CD8-positive, alpha-beta T cell (primary cell): ENCODE measurements at regions of chr1 and their contacts with region 1.

Region 1: DNA sequence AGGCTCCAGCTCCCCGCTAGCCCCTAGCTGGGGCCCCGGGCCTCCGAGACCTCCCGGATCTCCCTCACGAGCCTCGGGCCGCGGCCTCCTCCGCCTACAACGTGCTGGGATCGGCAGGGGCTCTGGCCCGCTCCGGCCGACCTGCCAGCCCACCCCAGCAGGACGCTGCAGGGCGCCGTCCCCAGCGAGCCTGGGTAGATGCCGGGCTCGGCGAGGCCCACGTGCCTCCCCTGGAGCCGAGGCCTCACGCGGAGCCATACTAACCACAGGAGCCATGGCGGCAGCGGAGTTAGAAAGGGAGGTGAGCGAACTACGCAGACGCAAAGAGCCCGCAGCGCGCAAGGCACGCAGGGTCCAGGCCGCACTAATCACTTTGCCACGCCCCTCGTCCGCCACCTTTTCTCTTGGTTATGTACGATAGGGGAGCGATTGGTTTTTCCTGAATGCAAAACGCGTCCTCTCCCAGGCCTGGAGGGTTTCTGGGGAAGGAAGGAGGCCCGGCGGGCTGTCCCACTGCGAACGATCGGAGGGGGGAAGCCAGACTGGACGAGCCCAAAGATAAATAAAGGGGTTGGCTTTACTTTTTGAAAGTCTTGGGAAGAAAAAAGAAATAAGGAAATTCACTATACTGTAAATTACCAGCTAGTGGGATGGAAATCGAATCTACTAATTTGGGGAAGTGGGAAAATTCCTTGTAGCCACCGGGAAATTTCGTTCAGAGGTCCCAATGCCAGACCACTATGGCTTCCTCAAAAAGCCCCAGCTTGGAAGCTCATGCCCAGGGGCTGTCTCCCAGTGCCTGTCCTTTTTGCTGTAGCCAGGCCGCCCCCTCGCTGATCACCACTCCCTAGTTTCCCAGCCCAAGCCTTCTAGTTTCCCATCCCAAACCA is at the start of gene RPL22:
- DNase-seq: peak; percentile 93 to 99 (median 97)
- ATAC-seq: peak; percentile 97
- H3K4me3 ChIP-seq: peak within 1 kb of the TSS; percentile 83 to 97
- H3K4me3 Mint-ChIP-seq: peak within 1 kb of the TSS; percentile 84
- H3K27ac ChIP-seq: peak within 1 kb of the TSS; percentile 68 to 82
- H3K27ac Mint-ChIP-seq: peak within 1 kb of the TSS; percentile 92
- H3K4me1 ChIP-seq: peaks cover 24% of the 10 kb centered on the region
- H3K4me1 Mint-ChIP-seq: peaks cover 42% of the 10 kb centered on the region
- H3K27me3 ChIP-seq: no peaks in the 10 kb centered on the region
- H3K27me3 Mint-ChIP-seq: no peaks in the 10 kb centered on the region
- CTCF ChIP-seq: no peak
- total RNA-seq, gene RPL22: 565 to 567 TPM

Region 2: GRCh38 chr1:6026095-6026809 is 173.3 kb before region 1 on chr1:
- CTCF ChIA-PET with region 1: no interaction called
- POLR2A ChIA-PET with region 1: interaction called, 3 read pairs
- intact Hi-C with region 1: loop called (anchors 1 kb)
- DNase-seq: peak; percentile 87 to 98 (median 94)
- ATAC-seq: peak; percentile 73
- H3K4me3 ChIP-seq: peak overlapping the region; percentile 76 to 93
- H3K4me3 Mint-ChIP-seq: peak overlapping the region; percentile 90
- H3K27ac ChIP-seq: peak overlapping the region; percentile 85 to 94
- H3K27ac Mint-ChIP-seq: peak overlapping the region; percentile 99
- H3K4me1 ChIP-seq: peaks cover 54% of the 10 kb centered on the region
- H3K4me1 Mint-ChIP-seq: peaks cover 55% of the 10 kb centered on the region
- H3K27me3 ChIP-seq: no peaks in the 10 kb centered on the region
- H3K27me3 Mint-ChIP-seq: no peaks in the 10 kb centered on the region
- CTCF ChIP-seq: no peak

Region 3: DNA sequence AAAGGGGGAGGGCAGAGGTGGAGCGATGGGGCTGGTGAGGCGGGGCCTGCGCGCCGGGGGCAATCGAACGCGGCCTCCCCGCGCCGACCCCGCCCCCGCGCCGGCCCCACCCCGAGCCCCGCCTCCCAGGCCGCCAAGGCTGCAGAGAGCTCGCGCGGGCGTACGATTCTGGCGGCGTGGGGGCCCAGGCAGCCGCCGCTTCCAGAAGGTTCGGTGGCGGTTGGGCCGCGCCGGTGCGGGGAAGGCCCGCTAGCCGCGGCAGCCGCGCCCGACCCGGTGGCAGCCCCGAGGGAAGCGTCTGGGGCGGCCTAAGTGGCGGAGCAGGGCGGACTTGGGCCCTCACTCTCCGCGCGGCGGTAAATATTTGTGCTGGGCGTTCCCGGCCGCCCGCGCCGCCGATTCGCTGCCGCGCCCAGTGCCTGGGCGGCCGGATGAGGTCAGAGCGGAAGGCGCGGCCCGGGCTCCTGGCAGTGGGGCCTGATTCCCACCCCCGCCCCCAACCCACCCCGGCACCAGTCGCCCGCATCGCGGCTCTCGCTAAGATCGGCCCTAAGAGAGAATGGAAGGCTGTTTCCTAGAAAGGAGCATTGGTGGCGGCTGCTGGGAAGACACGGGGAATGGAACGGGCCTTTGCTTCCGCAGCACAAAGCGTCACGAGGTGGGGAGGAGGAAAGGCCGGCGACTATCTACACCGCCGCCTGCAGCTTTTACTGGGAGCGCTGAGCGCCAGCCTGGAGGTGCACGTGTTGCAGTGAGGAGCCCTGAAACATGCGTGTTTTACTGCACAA is 194.1 kb after region 1 on chr1 and contains the start of gene ACOT7:
- CTCF ChIA-PET with region 1: no interaction called
- POLR2A ChIA-PET with region 1: no interaction called
- intact Hi-C with region 1: loop called (anchors 1 kb)
- DNase-seq: peak; percentile 79 to 94 (median 89)
- ATAC-seq: peak; percentile 93
- H3K4me3 ChIP-seq: peak within 1 kb of the TSS; percentile 33 to 62
- H3K4me3 Mint-ChIP-seq: peak within 1 kb of the TSS; percentile 88
- H3K27ac ChIP-seq: peak within 1 kb of the TSS; percentile 54 to 88
- H3K27ac Mint-ChIP-seq: peak within 1 kb of the TSS; percentile 90
- H3K4me1 ChIP-seq: peaks cover 15% of the 10 kb centered on the region
- H3K4me1 Mint-ChIP-seq: peaks cover 24% of the 10 kb centered on the region
- H3K27me3 ChIP-seq: no peaks in the 10 kb centered on the region
- H3K27me3 Mint-ChIP-seq: no peaks in the 10 kb centered on the region
- CTCF ChIP-seq: no peak
- total RNA-seq, gene ACOT7: 2.8 to 3.1 TPM

Region 4: GRCh38 chr1:6613361-6614018 is 413.9 kb after region 1 on chr1 and contains the start of gene PHF13:
- CTCF ChIA-PET with region 1: no interaction called
- POLR2A ChIA-PET with region 1: no interaction called
- intact Hi-C with region 1: loop called in 1 of 2 experiments (anchors 10 kb)
- DNase-seq: peak; percentile 98 to 100 (median 99)
- ATAC-seq: peak; percentile 93
- H3K4me3 ChIP-seq: peak within 1 kb of the TSS; percentile 70 to 72
- H3K4me3 Mint-ChIP-seq: peak within 1 kb of the TSS; percentile 90
- H3K27ac ChIP-seq: peak within 1 kb of the TSS; percentile 9 to 55
- H3K27ac Mint-ChIP-seq: peak within 1 kb of the TSS; percentile 86
- H3K4me1 ChIP-seq: peaks cover 18% of the 10 kb centered on the region
- H3K4me1 Mint-ChIP-seq: peaks cover 31% of the 10 kb centered on the region
- H3K27me3 ChIP-seq: no peaks in the 10 kb centered on the region
- H3K27me3 Mint-ChIP-seq: no peaks in the 10 kb centered on the region
- CTCF ChIP-seq: no peak
- total RNA-seq, gene PHF13: 3.3 to 3.5 TPM